GM12878 (cell line): ENCODE measurements at regions of chr17 and their contacts with region 1.

Region 1: DNA sequence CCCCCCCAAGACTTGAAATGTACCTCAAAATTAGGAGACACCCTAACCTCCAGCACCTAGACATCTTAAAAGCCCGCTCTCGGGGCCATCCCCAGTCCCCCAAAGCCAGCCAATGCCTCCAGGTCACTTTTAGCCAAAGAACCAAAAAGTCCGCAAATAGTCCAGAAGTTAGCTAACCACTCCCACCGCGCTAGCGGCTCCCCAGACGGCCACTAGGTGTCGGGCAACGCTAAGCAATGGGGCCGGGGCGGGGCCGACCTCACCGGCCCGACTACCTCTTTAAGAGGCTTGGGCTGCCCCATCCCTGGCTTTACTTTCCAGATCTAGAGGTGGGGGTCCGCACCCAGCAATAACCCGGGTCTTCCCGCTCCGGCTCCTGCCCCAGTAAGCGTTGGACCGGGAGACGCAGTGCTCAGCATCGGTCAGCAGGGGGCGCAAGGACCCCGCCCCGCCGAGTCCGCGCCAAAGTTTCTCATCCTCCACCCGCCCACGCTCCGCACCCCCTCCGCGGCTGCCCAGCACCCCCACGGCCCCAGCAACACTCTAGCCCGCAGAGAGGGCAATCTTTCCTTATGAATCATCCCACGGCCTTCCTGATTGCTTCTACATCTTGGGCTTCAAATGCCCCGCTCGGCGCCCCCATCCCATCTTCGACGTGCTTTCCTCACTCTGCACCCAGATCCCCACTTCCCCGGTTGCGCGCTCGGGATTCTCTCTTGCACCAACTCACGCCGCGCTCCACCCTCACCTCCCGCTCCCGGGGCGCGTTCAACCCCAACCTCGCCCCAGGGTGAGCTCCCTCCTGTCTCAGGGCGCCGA is 765 bp downstream of the COL1A1 start:
- DNase-seq: no peak
- ATAC-seq: peak; percentile 88
- H3K4me3 ChIP-seq: peak overlapping the region; percentile 70
- H3K27ac ChIP-seq: no peak overlapping the region
- H3K4me1 ChIP-seq: peaks cover 9% of the 10 kb centered on the region
- H3K27me3 ChIP-seq: peaks cover 9 to 13% of the 10 kb centered on the region in 2 experiments
- CTCF ChIP-seq: peak; percentile 70 to 99 (median 92)
- EP300 ChIP-seq: no peak
- POLR2A ChIP-seq: no peak
- RAD21 ChIP-seq: peak; percentile 92

Region 2: DNA sequence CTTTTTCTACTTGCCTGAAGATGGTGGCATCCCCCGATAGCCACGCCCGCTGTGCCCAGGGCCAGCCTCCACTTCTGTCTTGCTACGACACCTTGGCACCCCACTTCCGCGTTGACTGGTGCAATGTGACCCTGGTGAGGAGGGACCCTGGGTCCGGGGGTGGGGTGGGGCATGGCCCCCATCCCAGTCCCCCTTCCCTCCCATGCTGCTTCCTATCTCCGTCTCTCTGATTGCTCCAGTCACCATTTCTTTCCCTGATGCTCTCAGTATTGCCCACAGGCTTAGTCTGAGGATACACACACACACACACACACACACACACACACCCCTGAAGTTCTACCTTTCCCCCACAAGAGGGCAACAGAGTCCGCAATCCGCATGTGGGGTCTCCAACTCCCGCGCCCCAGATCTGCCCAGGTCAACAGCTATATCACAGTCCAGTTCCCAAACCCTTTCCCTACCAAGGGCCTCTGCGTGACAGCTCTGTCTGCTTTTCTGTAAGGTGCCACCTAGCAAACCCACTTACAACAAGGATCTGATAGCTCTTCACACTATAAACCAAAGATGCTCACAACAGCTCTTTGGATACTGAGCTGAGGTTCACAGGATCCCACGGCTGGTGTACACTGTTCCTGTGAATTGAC is 31.4 kb before region 1 on chr17:
- CTCF ChIA-PET with region 1: interaction called, 514 read pairs
- POLR2A ChIA-PET with region 1: interaction called, 28 read pairs
- RAD21 ChIA-PET with region 1: interaction called, 176 read pairs
- SMC1A ChIA-PET with region 1: interaction called, 177 read pairs
- in situ Hi-C with region 1: loop called (anchors 5 kb)
- intact Hi-C with region 1: loop called (anchors 1 kb)
- DNase-seq: peak; percentile 44
- ATAC-seq: peak; percentile 73
- H3K4me3 ChIP-seq: no peak overlapping the region
- H3K27ac ChIP-seq: no peak overlapping the region
- H3K4me1 ChIP-seq: peaks cover 18% of the 10 kb centered on the region
- H3K27me3 ChIP-seq: no peaks in the 10 kb centered on the region
- CTCF ChIP-seq: peak; percentile 88 to 95 (median 90)
- EP300 ChIP-seq: no peak
- POLR2A ChIP-seq: no peak
- RAD21 ChIP-seq: peak; percentile 96

Region 3: DNA sequence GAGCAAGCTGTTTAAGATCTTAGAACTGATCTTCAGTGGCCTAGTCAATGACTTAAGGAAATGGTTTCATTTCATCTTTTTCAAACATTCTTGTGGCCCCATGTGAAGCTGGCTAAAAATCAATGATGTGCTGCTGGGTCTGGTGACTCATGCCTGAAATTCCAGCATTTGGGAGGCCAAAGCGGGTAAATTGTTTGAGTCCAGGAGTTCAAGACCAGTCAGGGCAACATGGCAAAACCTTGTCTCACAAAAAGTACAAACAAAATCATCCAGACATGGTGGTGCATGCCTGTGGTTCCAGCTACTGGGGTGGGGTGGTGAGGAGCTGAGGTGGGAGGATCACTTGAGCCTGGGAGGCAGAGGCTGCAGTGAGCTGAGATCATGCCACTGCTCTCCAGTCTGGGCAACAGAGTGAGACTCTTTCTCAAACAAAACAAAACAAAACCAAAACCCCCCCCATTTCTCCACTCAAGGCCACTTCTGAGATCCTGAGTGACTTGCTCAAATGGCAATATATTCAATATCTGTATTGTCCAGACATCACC is 18.2 kb after region 1 on chr17:
- CTCF ChIA-PET with region 1: interaction called, 68 read pairs
- POLR2A ChIA-PET with region 1: no interaction called
- RAD21 ChIA-PET with region 1: interaction called, 11 read pairs
- SMC1A ChIA-PET with region 1: interaction called, 21 read pairs
- in situ Hi-C with region 1: no loop called
- intact Hi-C with region 1: no loop called
- DNase-seq: no peak
- ATAC-seq: peak; percentile 72
- H3K4me3 ChIP-seq: no peak overlapping the region
- H3K27ac ChIP-seq: no peak overlapping the region
- H3K4me1 ChIP-seq: peaks cover 11% of the 10 kb centered on the region
- H3K27me3 ChIP-seq: no peaks in the 10 kb centered on the region
- CTCF ChIP-seq: no peak
- EP300 ChIP-seq: no peak
- POLR2A ChIP-seq: no peak
- RAD21 ChIP-seq: no peak

Region 4: DNA sequence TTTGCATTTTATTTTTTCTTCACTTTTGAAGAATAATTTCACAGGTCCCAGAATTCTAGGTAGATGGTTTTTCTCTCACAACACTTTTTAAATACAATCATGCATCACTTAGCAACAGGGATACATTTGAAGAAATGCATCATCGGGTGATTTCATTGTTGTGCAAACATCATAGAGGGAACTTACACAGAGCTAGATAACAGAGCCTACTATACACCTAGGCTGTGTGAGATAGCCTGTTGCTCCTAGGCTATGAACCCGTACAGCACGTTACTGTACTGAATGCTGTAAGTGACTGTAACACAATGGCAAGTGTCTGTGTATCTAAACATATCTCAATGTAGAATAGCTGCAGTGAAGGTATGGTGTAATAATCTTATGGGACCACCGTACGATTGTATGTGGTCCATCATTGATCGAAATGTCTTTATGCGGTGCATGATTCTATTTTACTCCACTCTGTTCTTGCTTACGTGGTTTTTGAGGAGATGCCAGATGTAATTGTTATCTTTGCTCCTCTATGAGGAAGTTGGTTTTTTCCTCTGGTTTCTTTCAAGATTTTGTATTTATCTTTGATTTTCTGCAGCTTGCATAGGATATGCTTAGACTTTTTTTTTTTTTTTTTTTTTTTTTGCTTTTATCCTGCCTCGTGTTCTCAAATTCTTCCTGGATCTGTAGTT is 38.1 kb after region 1 on chr17:
- CTCF ChIA-PET with region 1: no interaction called
- POLR2A ChIA-PET with region 1: no interaction called
- RAD21 ChIA-PET with region 1: no interaction called
- SMC1A ChIA-PET with region 1: no interaction called
- in situ Hi-C with region 1: no loop called
- intact Hi-C with region 1: no loop called
- DNase-seq: no peak
- ATAC-seq: no peak
- H3K4me3 ChIP-seq: no peak overlapping the region
- H3K27ac ChIP-seq: no peak overlapping the region
- H3K4me1 ChIP-seq: no peaks in the 10 kb centered on the region
- H3K27me3 ChIP-seq: no peaks in the 10 kb centered on the region
- CTCF ChIP-seq: no peak
- EP300 ChIP-seq: no peak
- POLR2A ChIP-seq: no peak
- RAD21 ChIP-seq: no peak

Region 5: DNA sequence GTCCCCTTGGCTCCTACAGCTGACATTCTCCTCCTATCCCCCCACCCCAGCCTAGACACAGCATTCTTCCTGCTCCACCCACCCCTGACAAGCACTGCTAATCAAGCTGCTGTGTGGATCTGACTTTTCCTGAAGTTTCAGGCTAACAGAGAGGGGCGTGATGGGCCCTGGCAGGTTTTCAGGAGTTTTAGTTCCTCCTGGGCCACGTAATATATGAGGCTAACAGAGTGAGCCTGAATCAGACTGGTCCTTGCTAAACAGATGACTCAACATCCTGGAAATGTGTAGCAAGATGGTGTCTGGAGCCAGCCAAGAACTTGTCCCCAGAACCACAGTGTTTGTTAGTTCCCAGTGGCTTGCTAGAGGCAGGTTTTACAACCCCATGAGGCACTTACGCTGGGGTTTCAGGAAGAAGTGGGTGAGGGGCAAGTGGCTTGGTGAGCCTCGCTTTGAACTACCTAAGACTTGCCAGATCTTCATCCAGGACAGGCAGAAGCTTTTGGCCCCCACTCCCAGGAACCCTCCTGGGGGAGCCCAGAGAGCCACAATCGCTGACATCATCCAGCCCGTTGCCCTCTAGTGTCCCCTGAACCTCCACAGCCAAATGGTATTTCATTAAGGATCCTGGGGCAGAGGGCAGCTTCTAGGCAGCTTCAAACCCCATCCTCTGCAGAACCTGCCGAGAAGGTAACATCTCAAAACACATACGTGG is 89.5 kb after region 1 on chr17:
- CTCF ChIA-PET with region 1: interaction called, 294 read pairs
- POLR2A ChIA-PET with region 1: interaction called, 3 read pairs
- RAD21 ChIA-PET with region 1: interaction called, 106 read pairs
- SMC1A ChIA-PET with region 1: interaction called, 102 read pairs
- in situ Hi-C with region 1: loop called (anchors 10 kb)
- intact Hi-C with region 1: no loop called
- DNase-seq: no peak
- ATAC-seq: peak; percentile 89
- H3K4me3 ChIP-seq: no peak overlapping the region
- H3K27ac ChIP-seq: peak overlapping the region; percentile 27; the same call in 1 of the 2 replicates
- H3K4me1 ChIP-seq: peaks cover 14% of the 10 kb centered on the region
- H3K27me3 ChIP-seq: no peaks in the 10 kb centered on the region
- CTCF ChIP-seq: no peak
- EP300 ChIP-seq: no peak
- POLR2A ChIP-seq: no peak
- RAD21 ChIP-seq: no peak

Region 6: GRCh38 chr17:50331085-50331791 is 130.6 kb after region 1 on chr17:
- CTCF ChIA-PET with region 1: interaction called, 72 read pairs
- POLR2A ChIA-PET with region 1: interaction called, 3 read pairs
- RAD21 ChIA-PET with region 1: interaction called, 12 read pairs
- SMC1A ChIA-PET with region 1: interaction called, 6 read pairs
- in situ Hi-C with region 1: no loop called
- intact Hi-C with region 1: no loop called
- DNase-seq: no peak
- ATAC-seq: peak; percentile 65
- H3K4me3 ChIP-seq: no peak overlapping the region
- H3K27ac ChIP-seq: no peak overlapping the region
- H3K4me1 ChIP-seq: peaks cover 3% of the 10 kb centered on the region
- H3K27me3 ChIP-seq: no peaks in the 10 kb centered on the region
- CTCF ChIP-seq: no peak
- EP300 ChIP-seq: no peak
- POLR2A ChIP-seq: no peak
- RAD21 ChIP-seq: no peak

Region 7: DNA sequence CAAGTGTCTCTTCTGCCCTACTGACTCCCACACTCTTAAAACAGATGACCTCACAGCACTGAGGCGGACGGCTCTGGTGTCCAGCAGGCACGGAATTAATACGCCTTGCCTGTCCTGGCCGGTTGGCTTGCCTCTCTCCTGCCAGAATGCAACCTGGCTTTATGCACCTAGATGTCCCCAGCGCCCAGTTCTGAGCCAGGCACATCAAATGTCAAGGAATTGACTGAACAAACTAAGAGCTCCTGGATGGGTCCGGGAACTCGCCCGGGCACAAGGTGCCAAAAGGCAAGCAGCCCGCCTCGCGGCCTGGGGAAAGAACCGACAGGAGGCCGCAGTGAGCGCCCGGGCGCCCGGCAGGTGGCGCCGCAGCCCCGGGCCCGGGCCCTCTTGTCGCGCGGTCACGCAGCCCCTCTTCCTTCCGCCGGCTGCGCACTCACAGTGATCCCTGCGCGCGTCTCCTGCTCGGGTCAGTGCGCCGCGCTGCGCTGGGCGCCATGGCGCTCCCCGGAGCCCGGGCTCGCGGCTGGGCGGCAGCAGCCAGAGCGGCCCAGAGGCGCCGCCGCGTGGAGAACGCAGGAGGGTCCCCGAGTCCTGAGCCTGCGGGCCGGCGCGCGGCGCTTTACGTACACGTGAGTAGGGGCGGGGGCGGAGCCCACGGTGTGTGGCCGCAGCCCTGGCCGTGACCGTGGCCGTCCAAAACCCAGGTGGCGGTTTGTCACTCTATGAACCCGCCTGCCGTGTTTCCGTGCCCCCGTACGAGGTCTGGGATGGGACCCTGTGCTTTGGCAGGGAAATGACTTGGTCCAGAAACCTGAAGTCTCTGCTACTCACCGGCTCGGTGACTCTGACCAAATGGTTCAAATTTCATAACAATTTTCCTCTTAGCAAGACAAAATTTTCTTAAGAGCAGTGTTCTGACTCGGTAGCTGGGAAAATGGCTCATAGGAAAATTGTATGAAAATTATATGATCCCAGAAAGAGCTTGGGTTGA is 278.0 kb after region 1 on chr17 and contains the start of gene RSAD1:
- CTCF ChIA-PET with region 1: interaction called, 3 read pairs
- POLR2A ChIA-PET with region 1: no interaction called
- RAD21 ChIA-PET with region 1: interaction called, 3 read pairs
- SMC1A ChIA-PET with region 1: interaction called, 6 read pairs
- in situ Hi-C with region 1: no loop called
- intact Hi-C with region 1: loop called (anchors 1 kb)
- DNase-seq: peak; percentile 60
- ATAC-seq: peak; percentile 93
- H3K4me3 ChIP-seq: peak within 1 kb of the TSS; percentile 80
- H3K27ac ChIP-seq: peak within 1 kb of the TSS; percentile 38
- H3K4me1 ChIP-seq: no peaks in the 10 kb centered on the region
- H3K27me3 ChIP-seq: no peaks in the 10 kb centered on the region
- CTCF ChIP-seq: peak; percentile 71 to 87 (median 73)
- EP300 ChIP-seq: no peak
- POLR2A ChIP-seq: peak; percentile 96
- RAD21 ChIP-seq: peak; percentile 54
- polyA plus RNA-seq, gene RSAD1: 2.5 to 6.2 TPM